Posterior vena cava (tissue), 2 donors: ENCODE measurements at regions of chr9 and their contacts with region 1.

Region 1: DNA sequence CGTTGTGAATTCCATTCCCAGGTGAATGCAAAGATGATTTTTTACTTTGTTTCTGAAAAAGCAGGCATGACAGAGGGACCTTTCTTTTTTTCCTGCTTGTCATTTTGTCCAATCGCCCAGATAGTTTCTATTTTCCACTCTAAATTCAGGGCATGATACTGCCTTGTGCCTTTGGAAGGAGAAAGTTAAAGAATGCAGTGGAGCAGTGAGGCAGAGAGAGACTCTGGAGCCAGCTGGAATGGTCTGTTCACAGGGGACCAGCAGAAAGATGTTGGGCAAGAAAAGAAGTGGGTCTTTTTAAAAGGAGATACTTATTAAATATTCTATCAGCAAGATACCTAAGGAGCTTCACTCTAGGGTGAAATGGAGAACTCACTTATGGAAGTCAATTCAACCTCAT is 532.3 kb downstream of the BRINP1 start:
- DNase-seq: no peak

Region 2: GRCh38 chr9:118701985-118702384 is 134.9 kb before region 1 on chr9:
- intact Hi-C with region 1: no loop called
- DNase-seq: no peak

Region 3: DNA sequence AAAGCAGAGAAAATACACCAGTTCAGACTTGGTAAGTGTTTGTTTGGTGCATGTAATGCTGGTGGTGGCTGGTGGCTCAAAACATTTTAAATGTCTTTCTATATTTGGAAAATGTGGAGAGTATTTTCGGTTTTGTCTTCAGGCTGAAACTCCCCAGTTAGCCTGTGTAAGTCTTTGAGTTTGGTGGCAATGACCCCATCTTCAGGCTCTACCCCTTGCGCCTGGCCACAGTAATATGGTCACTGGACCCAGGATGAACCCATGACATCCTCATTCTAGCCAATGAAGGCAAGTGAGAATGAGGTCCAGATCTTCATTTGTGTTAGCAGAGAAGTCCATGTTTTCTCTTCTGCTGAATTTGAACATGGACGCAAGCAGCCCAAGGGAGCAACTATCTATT is 109.8 kb after region 1 on chr9:
- intact Hi-C with region 1: no loop called
- DNase-seq: no peak

Region 4: GRCh38 chr9:119761737-119762288 is 924.9 kb after region 1 on chr9:
- intact Hi-C with region 1: loop called in 1 of 2 experiments (anchors 5 kb)
- DNase-seq: no peak